ENCODE measurements at regions of chr1 and their contacts with region 1.

Region 1: GRCh38 chr1:175129997-175130648 is 62.5 kb downstream of the KIAA0040 start:
- DNase-seq: no peak
- H3K4me3 ChIP-seq: no peak overlapping the region
- H3K27ac ChIP-seq: no peak overlapping the region
- H3K4me1 ChIP-seq: peaks cover 9% of the 10 kb centered on the region
- H3K27me3 ChIP-seq: no peaks in the 10 kb centered on the region
- CTCF ChIP-seq: no peak

Region 2: GRCh38 chr1:175035865-175036264 is 94.3 kb before region 1 on chr1:
- CTCF ChIA-PET with region 1: interaction called, 7 read pairs
- dilution Hi-C with region 1: loop called (anchors 5 kb)
- in situ Hi-C with region 1: loop called (anchors 10 kb)
- intact Hi-C with region 1: no loop called
- DNase-seq: peak; percentile 12
- H3K4me3 ChIP-seq: no peak overlapping the region
- H3K27ac ChIP-seq: no peak overlapping the region
- H3K4me1 ChIP-seq: peaks cover 14% of the 10 kb centered on the region
- H3K27me3 ChIP-seq: no peaks in the 10 kb centered on the region
- CTCF ChIP-seq: no peak

Region 3: DNA sequence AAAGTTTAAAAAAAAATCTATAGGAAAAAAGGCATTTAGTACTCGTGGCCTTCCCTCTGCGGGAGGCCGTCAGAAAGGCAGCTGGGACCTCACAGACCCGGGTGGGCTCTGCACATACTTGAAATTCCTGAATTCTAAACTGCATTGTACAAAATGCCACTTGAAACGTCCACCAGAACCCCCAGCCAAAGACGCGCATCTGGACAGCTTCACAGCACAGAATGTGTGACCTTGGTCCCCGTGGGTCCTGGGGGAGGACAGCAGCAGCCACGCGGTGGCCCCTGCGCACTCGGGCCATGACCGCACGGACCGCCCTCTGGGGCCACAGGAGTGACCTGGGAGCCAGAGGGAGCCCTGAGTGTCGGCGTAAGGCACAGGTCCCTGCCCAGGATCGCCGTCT is 86.3 kb before region 1 on chr1:
- CTCF ChIA-PET with region 1: no interaction called
- dilution Hi-C with region 1: loop called (anchors 5 kb)
- in situ Hi-C with region 1: loop called (anchors 10 kb)
- intact Hi-C with region 1: no loop called
- DNase-seq: no peak
- H3K4me3 ChIP-seq: no peak overlapping the region
- H3K27ac ChIP-seq: no peak overlapping the region
- H3K4me1 ChIP-seq: no peaks in the 10 kb centered on the region
- H3K27me3 ChIP-seq: peaks cover 2% of the 10 kb centered on the region
- CTCF ChIP-seq: no peak

Region 4: DNA sequence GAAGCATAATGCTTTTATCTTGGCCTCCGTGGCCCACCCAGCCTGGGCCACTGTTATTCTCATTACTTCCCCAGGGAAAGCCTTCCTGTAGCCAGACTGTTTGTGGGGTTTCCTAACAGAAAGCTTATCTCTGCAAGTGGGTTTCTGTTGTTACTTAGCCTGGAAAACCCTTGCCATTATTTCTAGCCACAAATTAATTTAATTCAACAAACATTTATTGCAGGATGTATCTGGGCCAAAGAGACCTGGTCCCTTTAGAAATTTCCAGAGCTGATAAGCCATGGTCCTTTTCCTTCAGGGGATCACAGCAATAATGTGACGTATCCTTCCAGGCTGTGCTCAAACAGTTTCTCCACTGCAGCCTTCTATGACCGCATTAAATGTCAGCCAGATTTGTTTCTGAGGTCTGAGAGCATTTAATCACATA is 41.6 kb before region 1 on chr1:
- CTCF ChIA-PET with region 1: interaction called, 24 read pairs
- dilution Hi-C with region 1: no loop called
- in situ Hi-C with region 1: no loop called
- intact Hi-C with region 1: no loop called
- DNase-seq: no peak
- H3K4me3 ChIP-seq: no peak overlapping the region
- H3K27ac ChIP-seq: no peak overlapping the region
- H3K4me1 ChIP-seq: no peaks in the 10 kb centered on the region
- H3K27me3 ChIP-seq: peaks cover 2% of the 10 kb centered on the region
- CTCF ChIP-seq: no peak

Region 5: GRCh38 chr1:175192630-175193526 is 62.8 kb after region 1 on chr1 and contains the start of gene KIAA0040:
- CTCF ChIA-PET with region 1: no interaction called
- dilution Hi-C with region 1: no loop called
- in situ Hi-C with region 1: no loop called
- intact Hi-C with region 1: no loop called
- DNase-seq: peak; percentile 84
- H3K4me3 ChIP-seq: peak within 1 kb of the TSS; percentile 71 to 92 (median 90)
- H3K27ac ChIP-seq: peak within 1 kb of the TSS; percentile 98
- H3K4me1 ChIP-seq: peaks cover 75% of the 10 kb centered on the region
- H3K27me3 ChIP-seq: no peaks in the 10 kb centered on the region
- CTCF ChIP-seq: peak in 1 of 2 donors; percentile 27
- total RNA-seq, gene KIAA0040: 34.3 to 75.0 TPM

Measured in mammary epithelial cell (primary cell).